HCT116 (cell line): ENCODE measurements at regions of chr11 and their contacts with region 1.

Region 1: DNA sequence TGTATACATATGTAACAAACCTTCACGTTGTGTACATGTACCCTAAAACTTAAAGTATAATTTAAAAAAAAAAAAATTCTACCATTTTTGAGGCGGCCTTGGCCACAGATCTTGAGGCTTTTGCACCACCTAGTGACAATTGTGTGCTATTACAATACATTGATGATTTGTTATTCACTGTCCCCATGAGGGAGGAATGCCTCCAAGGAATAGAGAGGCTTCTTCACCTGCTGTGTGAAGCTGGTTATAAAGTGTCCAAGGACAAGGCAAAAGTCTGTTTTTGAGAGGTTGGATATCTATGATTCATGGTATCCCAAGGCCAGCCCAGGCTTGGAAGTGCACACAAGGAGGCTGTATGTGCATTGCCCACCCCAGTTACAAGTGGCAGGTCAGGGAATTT is 30.7 kb downstream of the SLC22A25 start:
- DNase-seq: peak; percentile 10
- ATAC-seq: peak; percentile 81
- H3K4me3 ChIP-seq: no peak overlapping the region
- H3K27ac ChIP-seq: no peak overlapping the region
- H3K4me1 ChIP-seq: no peaks in the 10 kb centered on the region
- H3K27me3 ChIP-seq: peaks cover 26% of the 10 kb centered on the region
- CTCF ChIP-seq: peak; percentile 38 to 56 (median 55); a peak in 4 of 6 replicates
- POLR2A ChIP-seq: no peak
- RAD21 ChIP-seq: peak; percentile 65

Region 2: GRCh38 chr11:63032457-63032856 is 180.3 kb before region 1 on chr11:
- CTCF ChIA-PET with region 1: interaction called, 12 read pairs
- POLR2A ChIA-PET with region 1: no interaction called
- RAD21 ChIA-PET with region 1: no interaction called
- intact Hi-C with region 1: loop called (anchors 1 kb)
- DNase-seq: no peak
- ATAC-seq: no peak
- H3K4me3 ChIP-seq: no peak overlapping the region
- H3K27ac ChIP-seq: no peak overlapping the region
- H3K4me1 ChIP-seq: 0 out of 4 replicates have a peak, but pooled peaks cover 0 to 7% of the 10 kb centered on the region in 2 experiments
- H3K27me3 ChIP-seq: no peaks in the 10 kb centered on the region; the same call in 1 of the 2 replicates
- CTCF ChIP-seq: no peak
- POLR2A ChIP-seq: no peak
- RAD21 ChIP-seq: no peak

Region 3: GRCh38 chr11:63132985-63133775 is 79.6 kb before region 1 on chr11:
- CTCF ChIA-PET with region 1: interaction called, 4 read pairs
- POLR2A ChIA-PET with region 1: no interaction called
- RAD21 ChIA-PET with region 1: no interaction called
- intact Hi-C with region 1: loop called (anchors 5 kb)
- DNase-seq: no peak
- ATAC-seq: no peak
- H3K4me3 ChIP-seq: no peak overlapping the region
- H3K27ac ChIP-seq: no peak overlapping the region
- H3K4me1 ChIP-seq: no peaks in the 10 kb centered on the region
- H3K27me3 ChIP-seq: peaks cover 40% of the 10 kb centered on the region
- CTCF ChIP-seq: no peak
- POLR2A ChIP-seq: no peak
- RAD21 ChIP-seq: no peak

Region 4: DNA sequence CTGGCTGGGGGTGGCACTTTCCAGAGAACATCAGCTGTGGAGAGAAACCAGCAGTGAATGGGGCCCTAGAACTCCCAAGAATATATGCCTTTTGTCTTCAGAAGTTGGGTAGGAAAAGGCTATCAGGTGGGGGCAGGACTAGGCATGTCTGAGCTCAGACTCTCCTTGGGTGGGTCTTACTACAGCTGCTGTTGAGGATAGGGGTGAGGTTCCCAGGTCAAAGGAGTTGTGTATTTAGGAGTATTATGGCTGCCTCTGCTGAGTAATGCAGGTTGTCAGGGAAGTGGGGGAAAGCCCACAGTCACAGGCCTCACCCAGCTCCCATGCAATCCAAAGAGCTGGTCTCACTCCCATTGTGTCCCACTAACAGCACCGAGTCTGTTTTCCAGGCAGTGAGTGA is 183.0 kb after region 1 on chr11:
- CTCF ChIA-PET with region 1: no interaction called
- POLR2A ChIA-PET with region 1: no interaction called
- RAD21 ChIA-PET with region 1: no interaction called
- intact Hi-C with region 1: no loop called
- DNase-seq: no peak
- ATAC-seq: no peak
- H3K4me3 ChIP-seq: no peak overlapping the region
- H3K27ac ChIP-seq: no peak overlapping the region
- H3K4me1 ChIP-seq: no peaks in the 10 kb centered on the region
- H3K27me3 ChIP-seq: peaks cover 45% of the 10 kb centered on the region
- CTCF ChIP-seq: no peak
- POLR2A ChIP-seq: no peak
- RAD21 ChIP-seq: no peak